ENCODE measurements at regions of chr17 and their contacts with region 1.

Region 1: GRCh38 chr17:59361916-59362810 is 30.7 kb downstream of the YPEL2 start:
- DNase-seq: peak; percentile 60
- H3K4me3 Mint-ChIP-seq: peak overlapping the region; percentile 8
- H3K27ac Mint-ChIP-seq: peak overlapping the region; percentile 73
- H3K4me1 Mint-ChIP-seq: peaks cover 78% of the 10 kb centered on the region
- H3K27me3 Mint-ChIP-seq: no peaks in the 10 kb centered on the region

Region 2: GRCh38 chr17:58337600-58338453 is 1024.3 kb before region 1 on chr17:
- CTCF ChIA-PET with region 1: no interaction called
- intact Hi-C with region 1: loop called (anchors 10 kb)
- DNase-seq: peak; percentile 98
- H3K4me3 Mint-ChIP-seq: peak overlapping the region; percentile 92
- H3K27ac Mint-ChIP-seq: peak overlapping the region; percentile 99
- H3K4me1 Mint-ChIP-seq: peaks cover 7% of the 10 kb centered on the region
- H3K27me3 Mint-ChIP-seq: no peaks in the 10 kb centered on the region

Region 3: GRCh38 chr17:59331129-59331928 is 30.8 kb before region 1 on chr17 and contains the start of gene YPEL2:
- CTCF ChIA-PET with region 1: interaction called, 16 read pairs
- intact Hi-C with region 1: loop called (anchors 1 kb)
- DNase-seq: peak; percentile 90
- H3K4me3 Mint-ChIP-seq: peak within 1 kb of the TSS; percentile 87
- H3K27ac Mint-ChIP-seq: peak within 1 kb of the TSS; percentile 67
- H3K4me1 Mint-ChIP-seq: peaks cover 68% of the 10 kb centered on the region
- H3K27me3 Mint-ChIP-seq: no peaks in the 10 kb centered on the region
- total RNA-seq, gene YPEL2: 4.3 to 4.4 TPM

Region 4: GRCh38 chr17:59373555-59374495 is 11.7 kb after region 1 on chr17:
- CTCF ChIA-PET with region 1: interaction called, 6 read pairs
- intact Hi-C with region 1: loop called (anchors 1 kb)
- DNase-seq: no peak
- H3K4me3 Mint-ChIP-seq: peak overlapping the region; percentile 28
- H3K27ac Mint-ChIP-seq: peak overlapping the region; percentile 81
- H3K4me1 Mint-ChIP-seq: peaks cover 64% of the 10 kb centered on the region
- H3K27me3 Mint-ChIP-seq: no peaks in the 10 kb centered on the region

Region 5: DNA sequence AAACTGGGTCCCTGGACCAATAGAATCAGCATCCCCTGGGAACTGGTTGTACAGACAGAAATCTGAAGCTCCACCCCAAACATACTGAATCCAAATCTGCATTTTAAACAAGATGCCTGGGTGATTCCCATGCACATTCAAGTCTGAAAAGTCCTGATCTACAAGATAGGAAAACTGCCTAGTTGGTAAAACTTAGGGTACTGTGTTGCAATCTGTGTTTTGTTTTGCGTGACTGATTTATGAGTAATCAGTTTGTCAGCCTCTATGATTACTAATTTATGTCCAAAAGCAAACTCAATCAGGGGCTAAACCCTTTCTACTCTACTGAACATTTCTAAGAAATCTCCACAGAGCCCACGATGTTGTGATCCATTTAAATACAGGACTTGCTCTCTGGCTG is 73.1 kb after region 1 on chr17:
- CTCF ChIA-PET with region 1: interaction called, 6 read pairs
- intact Hi-C with region 1: loop called (anchors 1 kb)
- DNase-seq: no peak
- H3K4me3 Mint-ChIP-seq: no peak overlapping the region
- H3K27ac Mint-ChIP-seq: peak overlapping the region; percentile 57
- H3K4me1 Mint-ChIP-seq: peaks cover 37% of the 10 kb centered on the region
- H3K27me3 Mint-ChIP-seq: no peaks in the 10 kb centered on the region

Measured in activated naive CD4-positive, alpha-beta T cell treated with anti-CD3 and anti-CD28 coated beads for 36 hours (primary cell).